A673 (cell line): ENCODE measurements at regions of chr2 and their contacts with region 1.

Region 1: DNA sequence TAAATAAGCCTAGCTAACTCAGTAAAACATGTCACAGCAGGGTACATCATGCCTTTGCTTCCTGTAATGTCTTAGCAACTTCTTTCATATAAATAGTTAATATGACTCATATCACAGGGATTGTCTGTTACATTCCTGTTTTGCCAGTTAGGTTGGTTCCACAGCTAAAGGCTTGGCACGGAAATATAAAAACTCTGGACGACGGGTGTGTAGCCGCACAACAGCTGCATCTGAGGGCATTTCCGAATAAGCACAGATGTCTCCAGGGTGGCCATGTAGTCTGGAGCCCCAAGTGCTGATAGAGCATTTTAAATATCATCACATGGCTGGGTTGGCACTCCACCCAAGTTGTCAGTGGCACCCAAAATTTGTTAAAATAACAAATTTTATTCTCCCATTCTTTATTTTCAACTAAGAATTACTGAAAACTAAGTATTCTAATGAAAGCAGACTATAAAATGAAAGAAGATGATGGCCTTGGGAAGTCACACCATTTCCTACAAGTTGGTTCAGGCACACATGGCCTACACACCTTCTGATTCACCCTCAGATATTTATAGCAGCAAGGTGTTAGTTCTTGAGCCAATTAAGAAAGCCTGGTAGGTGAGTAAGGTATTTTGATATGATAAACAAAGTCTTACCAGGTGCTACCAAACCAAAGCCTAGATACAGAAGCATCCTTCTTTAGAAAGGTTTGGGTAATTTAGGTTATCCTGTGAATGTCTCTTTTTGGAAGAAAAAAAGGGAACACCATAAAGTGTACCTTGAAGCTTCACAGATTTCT is 61.8 kb upstream of the STK17B start:
- DNase-seq: peak; percentile 93
- H3K4me3 ChIP-seq: no peak overlapping the region
- H3K27ac ChIP-seq: peak overlapping the region; percentile 92
- H3K4me1 ChIP-seq: peaks cover 30% of the 10 kb centered on the region
- H3K27me3 ChIP-seq: no peaks in the 10 kb centered on the region
- CTCF ChIP-seq: no peak

Region 2: DNA sequence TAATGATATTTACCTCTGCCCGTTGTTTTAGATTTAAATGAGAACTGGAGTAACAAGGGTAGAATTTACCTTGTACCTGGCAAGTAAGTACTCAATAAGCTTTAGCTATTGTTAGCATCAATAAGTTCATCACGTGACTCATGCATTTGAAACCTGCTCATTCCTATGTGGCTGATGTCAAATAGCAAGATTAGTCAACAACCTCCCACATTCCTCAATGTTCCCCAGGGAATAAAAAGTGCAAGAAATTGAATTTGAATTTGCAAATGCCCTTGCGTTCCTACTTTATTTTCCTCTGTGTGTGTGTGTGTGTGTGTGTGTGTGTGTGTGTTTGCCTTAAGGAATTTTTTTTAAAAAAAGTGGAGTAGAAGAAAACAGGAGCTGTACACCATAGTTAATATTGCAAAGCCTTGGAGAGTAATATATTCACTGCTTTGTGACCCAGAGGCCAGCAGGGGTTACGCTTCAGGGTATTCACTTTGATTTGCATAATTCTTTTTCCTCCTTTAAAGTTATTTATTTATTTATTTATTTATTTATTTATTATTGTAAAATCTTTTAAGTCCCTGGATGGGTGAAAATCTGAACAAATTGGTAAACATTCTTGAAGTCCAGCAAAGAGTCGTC is 120.7 kb before region 1 on chr2:
- CTCF ChIA-PET with region 1: no interaction called
- POLR2A ChIA-PET with region 1: no interaction called
- intact Hi-C with region 1: no loop called
- DNase-seq: peak; percentile 68
- H3K4me3 ChIP-seq: no peak overlapping the region
- H3K27ac ChIP-seq: no peak overlapping the region
- H3K4me1 ChIP-seq: no peaks in the 10 kb centered on the region
- H3K27me3 ChIP-seq: no peaks in the 10 kb centered on the region
- CTCF ChIP-seq: no peak

Region 3: DNA sequence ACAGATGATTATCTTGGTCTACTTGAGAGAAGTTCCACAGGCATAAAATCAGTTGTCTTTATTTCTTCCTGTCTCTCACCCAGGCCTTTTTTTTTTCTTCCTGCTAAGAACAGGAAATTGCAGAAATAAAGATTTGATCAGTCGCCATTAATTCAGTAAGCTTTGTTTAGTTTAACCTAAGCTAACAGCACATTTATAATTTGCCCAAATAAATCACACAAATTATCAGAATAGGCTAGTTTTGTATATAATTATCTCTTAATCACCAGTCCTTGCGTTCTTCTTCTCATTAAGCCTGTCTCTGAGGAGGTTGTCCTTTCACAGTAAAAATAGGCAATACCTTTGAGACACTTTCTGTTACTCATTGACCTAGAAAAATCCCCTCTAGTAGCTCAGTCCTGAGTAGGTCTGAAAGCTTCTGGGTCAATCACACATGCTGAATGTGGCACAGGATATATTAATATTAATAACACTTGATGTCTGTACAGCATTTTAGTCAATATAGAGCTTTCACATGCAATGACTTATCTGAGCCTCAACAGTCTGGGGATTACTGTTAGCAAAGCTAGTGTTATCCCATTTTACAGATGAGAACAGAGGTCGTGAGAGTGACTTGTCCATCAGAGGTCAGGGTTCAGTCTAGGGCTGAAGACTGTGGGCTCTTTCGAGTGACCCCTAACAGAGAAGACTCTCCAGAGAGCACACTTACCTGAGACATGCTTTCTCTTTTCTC is 50.6 kb before region 1 on chr2:
- CTCF ChIA-PET with region 1: no interaction called
- POLR2A ChIA-PET with region 1: no interaction called
- intact Hi-C with region 1: loop called (anchors 5 kb)
- DNase-seq: peak; percentile 48
- H3K4me3 ChIP-seq: no peak overlapping the region
- H3K27ac ChIP-seq: no peak overlapping the region
- H3K4me1 ChIP-seq: peaks cover 19% of the 10 kb centered on the region
- H3K27me3 ChIP-seq: no peaks in the 10 kb centered on the region
- CTCF ChIP-seq: no peak

Region 4: GRCh38 chr2:196266855-196267254 is 33.6 kb after region 1 on chr2:
- CTCF ChIA-PET with region 1: no interaction called
- POLR2A ChIA-PET with region 1: no interaction called
- intact Hi-C with region 1: loop called (anchors 2 kb)
- DNase-seq: peak; percentile 76
- H3K4me3 ChIP-seq: no peak overlapping the region
- H3K27ac ChIP-seq: no peak overlapping the region
- H3K4me1 ChIP-seq: peaks cover 13% of the 10 kb centered on the region
- H3K27me3 ChIP-seq: no peaks in the 10 kb centered on the region
- CTCF ChIP-seq: no peak